T-cell (primary cell): ENCODE measurements at regions of chr12 and their contacts with region 1.

Region 1: GRCh38 chr12:104456950-104457745 is 400 bp downstream of the CHST11 start:
- DNase-seq: peak in 32 of 35 experiments; percentile 26 to 72 (median 50)
- ATAC-seq: peak; percentile 43 to 48 (median 47)
- H3K4me3 ChIP-seq: peak overlapping the region; percentile 82 to 99
- H3K4me3 Mint-ChIP-seq: peak overlapping the region; percentile 98 to 99 (median 99)
- H3K27ac ChIP-seq: peak overlapping the region; percentile 67
- H3K27ac Mint-ChIP-seq: peak overlapping the region; percentile 94 to 97
- H3K4me1 ChIP-seq: peaks cover 21 to 35% of the 10 kb centered on the region in 2 experiments
- H3K4me1 Mint-ChIP-seq: peaks cover 43 to 47% (median 45%) of the 10 kb centered on the region in 3 donors
- H3K27me3 ChIP-seq: no peaks in the 10 kb centered on the region
- H3K27me3 Mint-ChIP-seq: no peaks in the 10 kb centered on the region

Region 2: DNA sequence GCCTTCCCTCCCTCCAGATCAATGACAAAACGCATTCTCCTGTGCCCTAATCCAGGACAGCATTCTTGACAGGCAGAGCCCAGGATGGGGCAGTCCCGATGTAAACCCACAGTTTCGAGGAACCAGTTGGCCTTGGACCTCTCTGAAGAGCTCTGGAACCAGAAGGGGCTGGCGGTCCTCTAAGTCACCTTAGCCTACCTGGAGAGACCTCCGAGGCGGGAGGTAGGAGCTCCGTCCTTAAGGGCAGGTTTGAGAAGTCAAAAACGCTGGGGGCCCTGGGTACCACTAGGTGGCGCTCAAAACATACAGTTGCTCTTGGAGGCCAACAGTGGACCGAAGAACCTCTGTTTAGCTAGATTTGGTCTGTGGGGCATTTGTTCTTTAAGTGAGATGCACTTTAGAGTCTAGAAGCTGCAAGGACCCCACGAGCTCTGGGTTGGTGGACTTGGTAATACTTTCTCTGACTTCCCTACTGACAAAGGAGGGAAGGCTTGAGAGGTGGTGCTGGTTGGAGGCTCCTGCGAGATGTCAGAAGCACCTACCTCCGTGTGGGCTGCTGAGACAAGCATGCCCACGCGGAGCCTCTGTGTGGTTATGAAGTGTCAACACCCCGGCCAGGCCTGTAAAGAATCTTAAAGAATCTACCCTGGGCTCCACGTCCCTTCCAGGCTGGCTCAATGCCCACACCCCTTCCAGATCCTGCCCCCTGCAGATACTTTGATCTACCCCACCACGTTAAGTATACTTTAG is 75.2 kb before region 1 on chr12:
- CTCF ChIA-PET with region 1: interaction called in 1 of 2 experiments, 11 read pairs
- POLR2A ChIA-PET with region 1: no interaction called
- DNase-seq: peak; percentile 53 to 90 (median 76)
- ATAC-seq: peak; percentile 82 to 92 (median 83)
- H3K4me3 ChIP-seq: no peak overlapping the region
- H3K4me3 Mint-ChIP-seq: no peak overlapping the region
- H3K27ac ChIP-seq: no peak overlapping the region
- H3K27ac Mint-ChIP-seq: no peak overlapping the region
- H3K4me1 ChIP-seq: peaks cover 0 to 9% of the 10 kb centered on the region in 2 experiments
- H3K4me1 Mint-ChIP-seq: peaks cover 10 to 13% (median 10%) of the 10 kb centered on the region in 3 donors
- H3K27me3 ChIP-seq: peaks cover 0 to 4% of the 10 kb centered on the region in 2 experiments
- H3K27me3 Mint-ChIP-seq: peaks cover 5 to 6% of the 10 kb centered on the region in 2 donors

Region 3: GRCh38 chr12:104478396-104479122 is 21.4 kb after region 1 on chr12:
- CTCF ChIA-PET with region 1: interaction called in 1 of 2 experiments, 8 read pairs
- POLR2A ChIA-PET with region 1: interaction called in 1 of 2 experiments, 11 read pairs
- DNase-seq: peak in 17 of 35 experiments; percentile 16 to 69 (median 31)
- ATAC-seq: peak; percentile 70 to 84 (median 84)
- H3K4me3 ChIP-seq: peak overlapping the region; percentile 27 to 57
- H3K4me3 Mint-ChIP-seq: peak overlapping the region; percentile 79 to 88 (median 79)
- H3K27ac ChIP-seq: peak overlapping the region; percentile 75
- H3K27ac Mint-ChIP-seq: peak overlapping the region; percentile 97
- H3K4me1 ChIP-seq: peaks cover 38 to 79% of the 10 kb centered on the region in 2 experiments
- H3K4me1 Mint-ChIP-seq: peaks cover 78 to 89% (median 88%) of the 10 kb centered on the region in 3 donors
- H3K27me3 ChIP-seq: no peaks in the 10 kb centered on the region
- H3K27me3 Mint-ChIP-seq: no peaks in the 10 kb centered on the region

Region 4: GRCh38 chr12:104494137-104494792 is 37.1 kb after region 1 on chr12:
- CTCF ChIA-PET with region 1: interaction called, 3 read pairs
- POLR2A ChIA-PET with region 1: interaction called, 4 to 12 read pairs
- DNase-seq: peak in 32 of 35 experiments; percentile 16 to 76 (median 52)
- ATAC-seq: peak; percentile 43 to 60 (median 56)
- H3K4me3 ChIP-seq: peak overlapping the region in 1 of 2 donors; percentile 36
- H3K4me3 Mint-ChIP-seq: peak overlapping the region; percentile 57 to 73 (median 72)
- H3K27ac ChIP-seq: peak overlapping the region; percentile 40
- H3K27ac Mint-ChIP-seq: peak overlapping the region; percentile 94 to 95
- H3K4me1 ChIP-seq: peaks cover 38 to 83% of the 10 kb centered on the region in 2 experiments
- H3K4me1 Mint-ChIP-seq: peaks cover 84 to 93% (median 93%) of the 10 kb centered on the region in 3 donors
- H3K27me3 ChIP-seq: no peaks in the 10 kb centered on the region
- H3K27me3 Mint-ChIP-seq: no peaks in the 10 kb centered on the region

Region 5: DNA sequence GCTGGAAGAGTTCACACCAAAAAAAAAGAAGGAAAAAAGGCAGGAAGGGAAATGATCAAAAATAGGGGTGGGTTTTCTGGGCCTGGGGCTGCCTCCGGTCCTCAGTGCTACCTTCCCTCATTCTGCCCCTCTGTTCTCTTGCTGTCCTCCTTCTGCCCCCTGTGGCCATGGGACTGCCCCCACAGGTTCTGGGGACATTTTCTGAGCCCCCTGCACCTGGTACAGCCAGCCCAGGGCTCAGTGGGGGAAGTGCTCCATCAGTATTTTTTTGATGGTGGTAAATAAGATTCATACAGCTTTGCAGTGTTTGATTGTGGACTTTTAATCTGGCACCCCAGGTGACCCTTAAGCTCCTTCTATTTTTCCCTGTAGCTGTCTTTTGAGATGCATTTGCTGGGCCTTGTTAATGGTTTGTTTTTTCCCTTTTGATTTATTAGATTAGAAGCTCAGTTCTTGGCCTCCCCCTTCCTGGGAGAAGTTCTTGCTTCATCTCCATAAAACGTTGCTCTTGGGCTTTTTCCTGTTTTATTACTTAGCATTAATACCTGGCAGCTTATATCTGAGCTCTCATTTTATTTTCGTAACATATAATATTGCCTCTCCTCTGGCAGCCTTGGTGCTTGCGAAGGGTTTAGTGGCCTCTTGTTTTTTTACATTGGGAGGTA is 42.7 kb after region 1 on chr12:
- CTCF ChIA-PET with region 1: interaction called, 3 to 6 read pairs
- POLR2A ChIA-PET with region 1: interaction called, 11 to 12 read pairs
- DNase-seq: no peak
- ATAC-seq: no peak
- H3K4me3 ChIP-seq: no peak overlapping the region
- H3K4me3 Mint-ChIP-seq: peak overlapping the region in 1 of 3 donors; percentile 54
- H3K27ac ChIP-seq: no peak overlapping the region
- H3K27ac Mint-ChIP-seq: peak overlapping the region; percentile 45 to 79
- H3K4me1 ChIP-seq: peaks cover 33 to 90% of the 10 kb centered on the region in 2 experiments
- H3K4me1 Mint-ChIP-seq: peaks cover 80 to 95% (median 95%) of the 10 kb centered on the region in 3 donors
- H3K27me3 ChIP-seq: no peaks in the 10 kb centered on the region
- H3K27me3 Mint-ChIP-seq: no peaks in the 10 kb centered on the region

Region 6: DNA sequence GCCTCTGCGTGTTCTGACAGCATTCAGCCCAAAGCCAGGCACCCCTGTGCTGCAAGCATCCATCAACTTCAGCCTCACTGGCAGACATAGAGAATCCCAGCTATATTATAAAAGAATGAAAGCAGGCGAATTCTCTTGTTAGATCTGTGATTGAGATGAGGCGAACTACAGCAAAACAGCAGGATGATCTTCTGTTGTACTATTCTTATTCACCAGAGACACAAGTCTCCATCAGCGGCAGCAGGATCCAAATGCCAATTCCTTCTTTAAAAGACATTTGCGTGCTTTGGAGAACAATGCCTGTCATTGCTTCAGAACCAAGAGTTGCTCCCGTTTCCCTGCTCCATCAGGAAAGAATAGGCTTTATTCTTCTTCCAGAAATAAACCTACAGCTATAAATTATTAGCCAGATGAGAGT is 312.0 kb after region 1 on chr12:
- CTCF ChIA-PET with region 1: interaction called in 1 of 2 experiments, 11 read pairs
- POLR2A ChIA-PET with region 1: no interaction called
- DNase-seq: no peak
- ATAC-seq: no peak
- H3K4me3 ChIP-seq: no peak overlapping the region
- H3K4me3 Mint-ChIP-seq: no peak overlapping the region
- H3K27ac ChIP-seq: no peak overlapping the region
- H3K27ac Mint-ChIP-seq: no peak overlapping the region
- H3K4me1 ChIP-seq: peaks cover 8 to 9% of the 10 kb centered on the region in 2 experiments
- H3K4me1 Mint-ChIP-seq: peaks cover 13 to 16% (median 15%) of the 10 kb centered on the region in 3 donors
- H3K27me3 ChIP-seq: no peaks in the 10 kb centered on the region
- H3K27me3 Mint-ChIP-seq: no peaks in the 10 kb centered on the region